CD4-positive, alpha-beta T cell (primary cell): ENCODE measurements at regions of chr15 and their contacts with region 1.

Region 1: GRCh38 chr15:78437762-78438302 is at the start of gene IREB2:
- DNase-seq: peak; percentile 93 to 99 (median 96)
- ATAC-seq: peak; percentile 91
- H3K4me3 ChIP-seq: peak within 1 kb of the TSS; percentile 61
- H3K4me3 Mint-ChIP-seq: peak within 1 kb of the TSS; percentile 94
- H3K27ac ChIP-seq: peak within 1 kb of the TSS; percentile 86 to 89
- H3K27ac Mint-ChIP-seq: peak within 1 kb of the TSS; percentile 97
- H3K4me1 ChIP-seq: peaks cover 34% of the 10 kb centered on the region
- H3K4me1 Mint-ChIP-seq: peaks cover 51% of the 10 kb centered on the region
- H3K27me3 ChIP-seq: no peaks in the 10 kb centered on the region
- H3K27me3 Mint-ChIP-seq: no peaks in the 10 kb centered on the region
- CTCF ChIP-seq: no peak
- total RNA-seq, gene IREB2: 84.3 to 89.0 TPM

Region 2: GRCh38 chr15:76931397-76932007 is 1506.3 kb before region 1 on chr15 and contains the start of gene RCN2:
- CTCF ChIA-PET with region 1: no interaction called
- POLR2A ChIA-PET with region 1: no interaction called
- intact Hi-C with region 1: loop called in 1 of 2 experiments (anchors 5 kb)
- DNase-seq: peak; percentile 84 to 96 (median 91)
- ATAC-seq: peak; percentile 98
- H3K4me3 ChIP-seq: peak within 1 kb of the TSS; percentile 59
- H3K4me3 Mint-ChIP-seq: peak within 1 kb of the TSS; percentile 98
- H3K27ac ChIP-seq: peak within 1 kb of the TSS in 1 of 2 donors; percentile 53
- H3K27ac Mint-ChIP-seq: peak within 1 kb of the TSS; percentile 91
- H3K4me1 ChIP-seq: peaks cover 6% of the 10 kb centered on the region
- H3K4me1 Mint-ChIP-seq: peaks cover 41% of the 10 kb centered on the region
- H3K27me3 ChIP-seq: no peaks in the 10 kb centered on the region
- H3K27me3 Mint-ChIP-seq: peaks cover 1% of the 10 kb centered on the region
- CTCF ChIP-seq: no peak
- total RNA-seq, gene RCN2: 18.1 to 19.1 TPM

Region 3: DNA sequence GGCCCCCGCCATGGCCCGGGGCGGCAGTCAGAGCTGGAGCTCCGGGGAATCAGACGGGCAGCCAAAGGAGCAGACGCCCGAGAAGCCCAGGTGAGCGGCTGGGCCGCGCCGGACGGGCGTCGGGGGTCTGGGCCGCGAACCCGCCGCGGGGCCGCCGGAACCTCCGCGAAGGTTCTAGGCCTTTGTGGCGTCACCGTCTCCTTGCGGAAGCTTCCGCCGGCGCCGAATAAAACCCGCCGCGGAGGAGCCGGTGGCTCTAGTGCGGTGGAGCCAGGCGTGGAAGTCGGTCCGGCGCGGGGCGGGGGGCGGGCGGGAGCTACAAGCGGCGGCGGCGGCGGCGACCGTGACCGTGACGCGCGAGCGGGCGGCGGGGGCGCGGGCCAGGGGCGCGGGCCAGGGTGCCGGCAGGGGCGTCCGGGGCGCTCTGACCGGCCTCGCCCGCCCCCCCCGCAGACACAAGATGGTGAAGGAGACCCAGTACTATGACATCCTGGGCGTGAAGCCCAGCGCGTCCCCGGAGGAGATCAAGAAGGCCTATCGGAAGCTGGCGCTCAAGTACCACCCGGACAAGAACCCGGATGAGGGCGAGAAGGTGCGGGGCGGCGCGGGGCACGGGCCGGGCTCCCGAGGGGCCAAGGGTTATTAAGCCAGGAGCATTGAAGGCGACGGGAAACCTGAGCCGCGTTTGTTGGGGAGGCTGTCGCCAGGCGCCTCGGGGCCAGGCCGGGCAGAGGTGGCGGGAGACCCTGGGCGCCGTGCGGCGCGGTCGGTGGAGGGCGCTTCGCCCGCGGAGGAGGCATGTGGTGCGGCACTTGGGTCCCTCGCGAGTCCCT is 173.3 kb before region 1 on chr15 and contains the start of gene DNAJA4:
- CTCF ChIA-PET with region 1: no interaction called
- POLR2A ChIA-PET with region 1: interaction called, 34 read pairs
- intact Hi-C with region 1: loop called in 1 of 2 experiments (anchors 5 kb)
- DNase-seq: peak; percentile 39 to 86 (median 61)
- ATAC-seq: peak; percentile 77
- H3K4me3 ChIP-seq: peak within 1 kb of the TSS; percentile 70
- H3K4me3 Mint-ChIP-seq: peak within 1 kb of the TSS; percentile 89
- H3K27ac ChIP-seq: peak within 1 kb of the TSS; percentile 54 to 62
- H3K27ac Mint-ChIP-seq: peak within 1 kb of the TSS; percentile 94
- H3K4me1 ChIP-seq: peaks cover 27% of the 10 kb centered on the region
- H3K4me1 Mint-ChIP-seq: peaks cover 36% of the 10 kb centered on the region
- H3K27me3 ChIP-seq: no peaks in the 10 kb centered on the region
- H3K27me3 Mint-ChIP-seq: no peaks in the 10 kb centered on the region
- CTCF ChIP-seq: peak; percentile 27
- total RNA-seq, gene DNAJA4: 47.0 to 48.5 TPM

Region 4: GRCh38 chr15:78449220-78449999 is 11.6 kb after region 1 on chr15:
- CTCF ChIA-PET with region 1: interaction called, 3 read pairs
- POLR2A ChIA-PET with region 1: interaction called, 29 read pairs
- intact Hi-C with region 1: no loop called
- DNase-seq: no peak
- ATAC-seq: no peak
- H3K4me3 ChIP-seq: no peak overlapping the region
- H3K4me3 Mint-ChIP-seq: no peak overlapping the region
- H3K27ac ChIP-seq: no peak overlapping the region
- H3K27ac Mint-ChIP-seq: no peak overlapping the region
- H3K4me1 ChIP-seq: peaks cover 15% of the 10 kb centered on the region
- H3K4me1 Mint-ChIP-seq: peaks cover 74% of the 10 kb centered on the region
- H3K27me3 ChIP-seq: no peaks in the 10 kb centered on the region
- H3K27me3 Mint-ChIP-seq: no peaks in the 10 kb centered on the region
- CTCF ChIP-seq: no peak

Region 5: DNA sequence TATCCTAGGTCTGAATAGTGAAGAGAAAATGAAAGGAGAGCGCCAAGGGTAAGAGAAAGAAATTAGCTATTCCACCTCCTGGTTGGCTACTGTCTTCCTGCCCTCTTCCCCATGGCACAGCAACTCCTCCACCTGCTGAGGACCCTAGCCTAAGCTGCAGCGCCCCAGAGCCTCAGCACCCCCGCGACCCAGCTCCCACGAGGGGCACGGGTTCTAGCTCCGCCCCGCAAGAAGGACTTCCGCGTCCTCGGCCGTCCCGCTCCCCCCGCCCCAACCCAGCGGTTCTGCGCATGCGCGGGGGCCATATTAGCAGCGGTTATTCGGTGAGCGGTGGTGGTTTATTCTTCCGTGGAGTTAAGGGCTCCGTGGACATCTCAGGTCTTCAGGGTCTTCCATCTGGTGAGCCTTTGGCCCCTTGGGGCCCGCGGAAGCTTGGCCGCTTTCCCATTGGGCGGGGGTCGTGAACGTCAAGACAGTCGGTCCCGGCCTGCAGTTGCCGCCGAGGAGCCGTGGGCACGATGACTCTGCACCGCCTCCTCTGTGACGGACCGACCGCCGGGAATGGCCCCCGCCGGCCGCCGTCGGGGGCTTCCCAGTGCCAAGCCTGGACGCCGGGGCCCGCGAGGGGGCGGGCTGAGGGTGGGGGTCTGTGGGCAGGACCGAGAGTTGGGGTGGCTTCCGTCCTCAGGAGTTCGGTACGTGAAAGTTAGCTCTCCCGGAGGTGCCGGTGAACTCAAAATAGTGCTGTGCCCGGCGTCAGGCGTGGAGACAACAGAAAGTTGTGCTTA is 102.5 kb after region 1 on chr15 and contains the start of gene PSMA4:
- CTCF ChIA-PET with region 1: no interaction called
- POLR2A ChIA-PET with region 1: interaction called, 51 read pairs
- intact Hi-C with region 1: loop called in 1 of 2 experiments (anchors 1 kb)
- DNase-seq: peak; percentile 87 to 96 (median 93)
- ATAC-seq: peak; percentile 84
- H3K4me3 ChIP-seq: peak within 1 kb of the TSS; percentile 77
- H3K4me3 Mint-ChIP-seq: peak within 1 kb of the TSS; percentile 93
- H3K27ac ChIP-seq: peak within 1 kb of the TSS; percentile 92 to 97
- H3K27ac Mint-ChIP-seq: peak within 1 kb of the TSS; percentile 99
- H3K4me1 ChIP-seq: peaks cover 30% of the 10 kb centered on the region
- H3K4me1 Mint-ChIP-seq: peaks cover 33% of the 10 kb centered on the region
- H3K27me3 ChIP-seq: no peaks in the 10 kb centered on the region
- H3K27me3 Mint-ChIP-seq: no peaks in the 10 kb centered on the region
- CTCF ChIP-seq: no peak
- total RNA-seq, gene PSMA4: 65.5 to 66.4 TPM

Region 6: GRCh38 chr15:79929435-79929834 is 1491.6 kb after region 1 on chr15:
- CTCF ChIA-PET with region 1: no interaction called
- POLR2A ChIA-PET with region 1: no interaction called
- intact Hi-C with region 1: loop called in 1 of 2 experiments (anchors 5 kb)
- DNase-seq: no peak
- ATAC-seq: no peak
- H3K4me3 ChIP-seq: no peak overlapping the region
- H3K4me3 Mint-ChIP-seq: peak overlapping the region; percentile 2
- H3K27ac ChIP-seq: no peak overlapping the region
- H3K27ac Mint-ChIP-seq: no peak overlapping the region
- H3K4me1 ChIP-seq: peaks cover 7% of the 10 kb centered on the region
- H3K4me1 Mint-ChIP-seq: peaks cover 9% of the 10 kb centered on the region
- H3K27me3 ChIP-seq: no peaks in the 10 kb centered on the region
- H3K27me3 Mint-ChIP-seq: peaks cover 4% of the 10 kb centered on the region
- CTCF ChIP-seq: no peak